ENCODE measurements at regions of chr22 and their contacts with region 1.

Region 1: DNA sequence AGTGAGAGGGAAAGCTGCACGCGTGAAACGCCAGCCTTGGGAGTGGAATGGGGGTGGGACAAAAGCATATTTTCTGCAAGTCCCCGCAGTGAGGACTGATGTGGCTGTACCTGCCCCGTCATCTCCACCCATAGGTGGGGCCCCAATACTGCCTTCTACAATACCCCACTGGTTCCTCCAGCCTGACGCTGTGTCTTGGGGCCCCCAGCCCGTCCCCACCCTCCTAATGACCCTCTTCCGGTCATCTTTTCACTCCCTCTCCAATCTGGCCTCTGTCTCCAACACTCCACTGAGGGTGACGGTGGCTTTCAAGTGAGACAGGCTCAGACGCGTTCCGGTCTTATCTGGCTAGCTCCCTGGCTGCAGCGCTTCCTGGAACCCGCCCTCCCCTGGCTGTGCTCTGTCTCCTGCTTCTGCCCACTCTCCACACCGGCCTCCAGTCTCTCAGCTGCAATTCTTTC is 104.2 kb downstream of the MICAL3 start:
- DNase-seq: no peak
- H3K4me3 ChIP-seq: no peak overlapping the region
- H3K27me3 ChIP-seq: no peaks in the 10 kb centered on the region
- CTCF ChIP-seq: no peak

Region 2: DNA sequence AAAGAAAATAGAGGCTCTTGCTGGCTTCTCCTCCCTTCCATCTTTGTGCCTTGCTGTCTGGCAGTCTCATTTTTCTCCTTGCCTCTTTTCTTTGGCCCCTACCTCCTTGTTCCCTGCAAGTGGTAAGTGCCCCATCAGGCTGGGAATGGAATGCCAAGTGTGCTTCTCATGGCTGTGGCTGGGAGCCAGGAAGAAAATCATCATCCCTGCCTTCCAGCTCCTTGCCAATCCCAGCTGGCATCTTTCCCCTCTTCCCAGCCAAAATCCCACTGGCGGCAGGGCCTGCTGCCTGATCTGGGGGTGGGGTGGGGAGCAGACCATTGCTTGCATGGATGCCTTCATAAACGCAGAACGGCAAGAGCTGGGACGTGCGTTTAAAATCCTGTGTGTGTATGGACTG is 383.9 kb before region 1 on chr22:
- CTCF ChIA-PET with region 1: no interaction called
- POLR2A ChIA-PET with region 1: interaction called, 20 read pairs
- DNase-seq: no peak
- H3K4me3 ChIP-seq: no peak overlapping the region
- H3K27me3 ChIP-seq: no peaks in the 10 kb centered on the region
- CTCF ChIP-seq: no peak

Region 3: GRCh38 chr22:17606496-17606895 is 313.7 kb before region 1 on chr22:
- CTCF ChIA-PET with region 1: no interaction called
- POLR2A ChIA-PET with region 1: interaction called, 15 read pairs
- DNase-seq: no peak
- H3K4me3 ChIP-seq: no peak overlapping the region
- H3K27me3 ChIP-seq: no peaks in the 10 kb centered on the region
- CTCF ChIP-seq: no peak

Region 4: DNA sequence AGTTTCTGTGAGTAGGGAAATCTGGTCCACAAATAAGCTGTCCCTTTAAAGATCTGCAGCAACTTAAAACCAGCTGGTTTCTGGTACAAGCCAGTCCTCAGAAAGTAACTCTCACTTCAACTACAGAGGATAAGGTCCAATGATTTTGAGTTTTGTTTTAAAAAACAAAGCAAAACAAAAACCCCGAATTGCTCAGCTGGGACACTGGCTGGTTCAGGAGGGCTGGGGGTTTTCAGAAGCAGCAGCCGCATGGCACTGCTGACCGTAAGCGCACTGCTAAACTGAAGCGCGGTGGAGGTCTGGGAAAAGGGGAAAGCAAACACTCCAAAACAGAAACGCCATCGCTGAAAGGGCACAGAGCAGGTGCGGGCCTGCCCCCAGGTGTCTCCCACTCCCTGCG is 44.5 kb after region 1 on chr22:
- CTCF ChIA-PET with region 1: no interaction called
- POLR2A ChIA-PET with region 1: no interaction called
- DNase-seq: no peak
- H3K4me3 ChIP-seq: no peak overlapping the region
- H3K27me3 ChIP-seq: no peaks in the 10 kb centered on the region
- CTCF ChIP-seq: no peak

Region 5: DNA sequence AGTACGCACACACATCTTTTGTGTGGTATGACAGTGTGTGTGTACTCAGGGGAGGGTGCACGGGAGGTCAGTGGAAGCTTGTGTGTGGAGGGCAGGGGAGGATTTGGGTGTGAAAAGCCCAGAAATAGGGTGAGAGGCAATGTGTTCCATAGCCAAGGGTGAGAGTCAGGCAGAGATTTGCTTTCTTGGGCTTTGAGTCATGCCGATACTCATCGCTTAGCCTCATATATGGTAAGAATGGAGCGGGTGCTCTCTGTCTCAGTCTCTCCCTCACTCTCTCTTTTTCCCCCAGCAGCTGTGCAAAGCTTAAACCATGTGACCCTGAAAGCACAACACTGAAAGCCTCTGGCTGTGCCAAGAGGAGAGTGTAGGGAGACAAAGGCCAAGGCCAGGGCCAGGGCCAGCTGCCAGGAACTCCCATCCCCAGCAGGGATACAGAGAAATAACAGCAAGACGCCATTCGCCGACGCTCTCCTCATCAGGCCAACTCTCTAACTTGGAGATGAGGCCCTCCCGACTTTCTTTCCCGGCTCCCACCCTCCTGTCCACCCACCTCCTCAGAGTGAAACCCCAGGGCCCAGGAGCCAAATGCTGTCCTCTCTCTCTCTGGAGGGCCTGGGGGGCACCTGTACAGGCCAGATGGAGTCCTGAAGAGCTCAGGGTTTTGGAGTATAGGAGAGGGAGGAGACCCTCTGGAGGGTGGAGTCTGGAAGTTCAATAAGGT is 124.5 kb after region 1 on chr22:
- CTCF ChIA-PET with region 1: no interaction called
- POLR2A ChIA-PET with region 1: no interaction called
- DNase-seq: no peak
- H3K4me3 ChIP-seq: no peak overlapping the region
- H3K27me3 ChIP-seq: no peaks in the 10 kb centered on the region
- CTCF ChIP-seq: no peak

Region 6: GRCh38 chr22:18057568-18058209 is 137.5 kb after region 1 on chr22:
- CTCF ChIA-PET with region 1: no interaction called
- POLR2A ChIA-PET with region 1: no interaction called
- DNase-seq: peak; percentile 90
- H3K4me3 ChIP-seq: no peak overlapping the region
- H3K27me3 ChIP-seq: no peaks in the 10 kb centered on the region
- CTCF ChIP-seq: no peak